Left ventricle myocardium superior (tissue), 1 donor: ENCODE measurements at regions of chr11 and their contacts with region 1.

Region 1: DNA sequence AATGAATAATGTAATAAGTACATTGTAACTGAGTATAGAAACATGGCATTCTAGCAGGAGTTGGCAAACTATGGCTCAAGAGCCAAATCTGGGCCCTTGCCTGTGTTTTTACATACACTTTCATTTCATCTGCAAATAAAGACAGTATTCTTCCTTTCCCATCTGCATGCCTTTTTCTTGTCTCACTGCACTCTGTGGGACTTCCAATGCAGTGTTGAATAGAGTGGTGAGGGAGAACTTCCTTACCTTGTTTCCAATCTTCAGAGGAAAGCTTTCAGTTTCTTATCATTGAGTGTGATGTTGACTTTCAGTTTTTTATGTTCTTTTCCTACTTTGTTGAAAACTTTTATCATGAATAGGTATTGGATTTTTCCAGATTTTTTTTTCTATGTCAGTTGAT is 82.1 kb downstream of the USP47 start:
- DNase-seq: no peak
- ATAC-seq: peak; percentile 27

Region 2: DNA sequence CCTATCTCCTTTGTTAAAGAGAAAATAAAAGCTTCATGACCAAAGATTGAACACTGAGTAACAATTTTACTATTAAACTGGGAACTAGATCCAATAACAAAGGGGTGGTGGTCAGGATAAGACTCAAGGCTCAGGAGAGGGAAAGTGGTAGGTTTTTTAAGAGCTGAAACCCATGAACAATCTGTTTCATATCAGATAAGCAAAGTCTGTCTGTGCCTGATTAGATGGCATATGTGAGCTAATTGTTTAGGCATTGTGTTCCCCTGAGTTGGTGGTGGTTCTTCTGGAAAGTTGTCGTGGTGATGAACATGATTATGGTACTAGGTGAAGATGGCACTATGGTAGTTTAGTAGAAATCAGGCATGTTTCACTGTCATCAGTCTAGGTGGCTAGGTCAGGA is 57.6 kb before region 1 on chr11:
- intact Hi-C with region 1: no loop called
- DNase-seq: no peak
- ATAC-seq: no peak

Region 3: GRCh38 chr11:11993839-11994238 is 70.0 kb after region 1 on chr11:
- intact Hi-C with region 1: no loop called
- DNase-seq: peak; percentile 65
- ATAC-seq: peak; percentile 81

Region 4: GRCh38 chr11:12281571-12282478 is 358.0 kb after region 1 on chr11:
- intact Hi-C with region 1: loop called (anchors 10 kb)
- DNase-seq: peak; percentile 86
- ATAC-seq: peak; percentile 68